Activated CD8-positive, alpha-beta T cell treated with anti-CD3 and anti-CD28 coated beads for 36 hours (primary cell): ENCODE measurements at regions of chr21 and their contacts with region 1.

Region 1: GRCh38 chr21:33947451-33948095 is 32.0 kb upstream of the ATP5PO start:
- DNase-seq: peak; percentile 94
- ATAC-seq: peak; percentile 57
- H3K4me3 Mint-ChIP-seq: peak overlapping the region; percentile 75
- H3K27ac Mint-ChIP-seq: peak overlapping the region; percentile 100
- H3K4me1 Mint-ChIP-seq: peaks cover 75% of the 10 kb centered on the region
- H3K27me3 Mint-ChIP-seq: peaks cover 3% of the 10 kb centered on the region
- CTCF ChIP-seq: no peak

Region 2: GRCh38 chr21:33931799-33932390 is 15.7 kb before region 1 on chr21:
- CTCF ChIA-PET with region 1: interaction called, 31 read pairs
- POLR2A ChIA-PET with region 1: interaction called, 160 read pairs
- intact Hi-C with region 1: loop called (anchors 2 kb)
- DNase-seq: no peak
- ATAC-seq: no peak
- H3K4me3 Mint-ChIP-seq: peak overlapping the region; percentile 91
- H3K27ac Mint-ChIP-seq: peak overlapping the region; percentile 99
- H3K4me1 Mint-ChIP-seq: peaks cover 33% of the 10 kb centered on the region
- H3K27me3 Mint-ChIP-seq: no peaks in the 10 kb centered on the region
- CTCF ChIP-seq: no peak

Region 3: DNA sequence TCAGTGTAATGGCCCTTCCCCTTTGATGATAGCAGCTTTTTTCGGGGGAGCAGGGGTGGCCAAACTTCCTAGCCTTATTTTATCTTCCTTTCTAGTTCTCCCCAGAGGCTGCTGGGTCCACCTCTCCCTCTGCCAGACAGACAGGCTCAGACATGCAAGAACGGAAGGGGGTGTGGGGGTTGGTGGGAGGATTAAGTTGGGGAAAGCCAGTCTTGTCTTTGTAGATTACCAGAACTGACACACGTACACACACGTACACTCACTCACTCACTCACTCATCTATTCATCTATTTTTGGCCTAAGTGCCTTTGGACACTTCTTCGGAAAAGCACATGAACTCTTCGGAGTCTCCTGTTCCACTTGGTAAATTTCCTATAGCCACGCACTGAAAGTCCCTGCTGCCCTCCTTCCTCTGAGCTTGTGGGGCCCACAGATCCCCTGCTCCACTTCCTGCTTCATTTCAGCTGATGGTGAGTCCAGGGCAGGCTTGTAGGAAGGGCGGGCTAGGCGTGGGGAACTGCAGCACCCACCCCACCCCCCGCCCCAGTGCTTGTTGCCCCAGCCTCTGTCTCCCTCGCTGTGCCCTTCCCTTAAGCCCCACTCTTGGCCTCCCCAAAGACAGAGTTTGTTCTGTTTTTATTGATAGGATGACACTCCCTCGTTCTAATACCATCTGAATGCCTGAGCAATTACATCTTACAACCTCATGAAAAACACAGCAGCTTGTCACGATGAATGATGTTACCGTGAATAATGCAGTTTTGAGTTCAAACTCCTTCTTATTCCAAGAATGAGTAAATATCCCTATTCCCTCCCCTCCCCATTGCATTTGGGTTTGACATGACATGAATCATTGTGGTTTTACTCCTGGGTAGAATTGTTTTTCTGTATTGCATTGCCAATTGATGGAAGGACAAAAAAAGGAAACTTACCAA is 28.8 kb after region 1 on chr21:
- CTCF ChIA-PET with region 1: interaction called, 17 read pairs
- POLR2A ChIA-PET with region 1: interaction called, 60 read pairs
- intact Hi-C with region 1: loop called (anchors 2 kb)
- DNase-seq: peak; percentile 78
- ATAC-seq: peak; percentile 45
- H3K4me3 Mint-ChIP-seq: peak overlapping the region; percentile 70
- H3K27ac Mint-ChIP-seq: peak overlapping the region; percentile 99
- H3K4me1 Mint-ChIP-seq: peaks cover 71% of the 10 kb centered on the region
- H3K27me3 Mint-ChIP-seq: no peaks in the 10 kb centered on the region
- CTCF ChIP-seq: no peak

Region 4: DNA sequence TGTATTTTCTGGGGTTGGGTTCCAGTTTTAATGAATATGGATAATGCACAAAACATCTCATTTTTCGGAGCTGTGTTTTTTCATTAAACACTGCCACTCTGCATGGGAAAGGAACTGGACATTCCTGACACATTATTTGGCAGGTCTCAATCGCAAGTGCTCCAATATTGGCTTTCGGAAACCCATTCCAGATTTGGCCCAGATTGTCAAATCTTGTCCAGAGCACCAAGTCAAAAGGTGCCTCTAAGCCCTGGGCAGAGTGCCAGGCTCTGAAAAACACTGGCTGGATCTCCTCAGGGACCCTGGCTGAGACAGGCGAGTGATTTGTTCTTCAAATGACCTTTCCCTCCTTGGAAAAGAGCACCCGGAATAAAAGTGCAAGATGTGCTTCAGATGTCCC is 57.4 kb after region 1 on chr21:
- CTCF ChIA-PET with region 1: no interaction called
- POLR2A ChIA-PET with region 1: no interaction called
- intact Hi-C with region 1: no loop called
- DNase-seq: no peak
- ATAC-seq: no peak
- H3K4me3 Mint-ChIP-seq: no peak overlapping the region
- H3K27ac Mint-ChIP-seq: no peak overlapping the region
- H3K4me1 Mint-ChIP-seq: peaks cover 14% of the 10 kb centered on the region
- H3K27me3 Mint-ChIP-seq: no peaks in the 10 kb centered on the region
- CTCF ChIP-seq: no peak

Region 5: DNA sequence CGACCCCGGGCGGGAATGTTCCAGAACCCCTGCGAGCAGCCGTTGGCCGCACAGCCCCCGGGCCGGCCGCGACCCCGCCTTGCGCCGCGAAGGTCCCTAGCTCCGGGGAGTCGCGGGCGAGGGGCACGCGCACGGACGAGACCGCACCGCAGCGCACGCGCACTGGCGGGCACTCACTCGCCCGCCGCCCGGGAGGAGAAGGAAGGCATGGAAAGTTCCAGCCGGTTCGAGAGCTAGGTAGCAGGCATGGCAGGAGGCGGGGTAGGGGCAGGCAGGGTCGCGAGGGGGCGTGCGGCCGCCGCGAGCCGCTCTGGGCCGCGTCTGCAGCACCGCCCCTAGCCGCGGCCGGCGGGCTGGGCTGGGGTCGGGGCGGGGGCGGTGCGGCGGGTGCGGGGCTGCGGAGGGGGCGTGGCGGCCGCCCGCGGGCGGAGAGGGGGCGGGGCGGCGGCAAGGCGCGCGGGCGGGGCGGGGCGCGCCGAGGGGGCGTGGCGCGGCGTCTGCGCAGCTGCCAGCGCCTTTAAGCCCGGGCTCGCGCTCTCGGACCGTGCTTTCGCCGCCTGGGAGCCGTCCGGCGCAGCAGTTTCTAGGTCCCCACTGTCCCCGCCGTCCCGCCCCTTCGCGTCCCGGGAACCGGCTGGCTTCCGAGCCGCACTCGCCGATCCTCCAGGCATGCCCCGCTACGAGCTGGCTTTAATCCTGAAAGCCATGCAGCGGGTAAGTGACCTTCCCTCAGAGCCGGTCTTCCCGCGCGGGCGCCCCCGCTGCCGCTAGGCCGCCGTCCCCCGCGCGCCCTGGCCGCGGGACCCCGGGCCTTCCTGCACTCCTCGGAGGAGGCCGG is 125.7 kb after region 1 on chr21 and contains the starts of genes MRPS6 and SLC5A3:
- CTCF ChIA-PET with region 1: interaction called, 6 read pairs
- POLR2A ChIA-PET with region 1: interaction called, 12 read pairs
- intact Hi-C with region 1: loop called (anchors 5 kb)
- DNase-seq: peak; percentile 74
- ATAC-seq: peak; percentile 69
- H3K4me3 Mint-ChIP-seq: peak within 1 kb of the TSS; percentile 95
- H3K27ac Mint-ChIP-seq: peak within 1 kb of the TSS; percentile 91
- H3K4me1 Mint-ChIP-seq: peaks cover 37% of the 10 kb centered on the region
- H3K27me3 Mint-ChIP-seq: no peaks in the 10 kb centered on the region
- CTCF ChIP-seq: no peak
- total RNA-seq, gene MRPS6: 93.9 to 95.2 TPM
- total RNA-seq, gene SLC5A3: 21.1 to 21.9 TPM

Region 6: GRCh38 chr21:34091607-34092006 is 144.0 kb after region 1 on chr21:
- CTCF ChIA-PET with region 1: interaction called, 3 read pairs
- POLR2A ChIA-PET with region 1: interaction called, 11 read pairs
- intact Hi-C with region 1: no loop called
- DNase-seq: no peak
- ATAC-seq: no peak
- H3K4me3 Mint-ChIP-seq: no peak overlapping the region
- H3K27ac Mint-ChIP-seq: peak overlapping the region; percentile 47
- H3K4me1 Mint-ChIP-seq: peaks cover 57% of the 10 kb centered on the region
- H3K27me3 Mint-ChIP-seq: no peaks in the 10 kb centered on the region
- CTCF ChIP-seq: peak; percentile 43